ENCODE measurements at regions of chr4 and their contacts with region 1.

Region 1: DNA sequence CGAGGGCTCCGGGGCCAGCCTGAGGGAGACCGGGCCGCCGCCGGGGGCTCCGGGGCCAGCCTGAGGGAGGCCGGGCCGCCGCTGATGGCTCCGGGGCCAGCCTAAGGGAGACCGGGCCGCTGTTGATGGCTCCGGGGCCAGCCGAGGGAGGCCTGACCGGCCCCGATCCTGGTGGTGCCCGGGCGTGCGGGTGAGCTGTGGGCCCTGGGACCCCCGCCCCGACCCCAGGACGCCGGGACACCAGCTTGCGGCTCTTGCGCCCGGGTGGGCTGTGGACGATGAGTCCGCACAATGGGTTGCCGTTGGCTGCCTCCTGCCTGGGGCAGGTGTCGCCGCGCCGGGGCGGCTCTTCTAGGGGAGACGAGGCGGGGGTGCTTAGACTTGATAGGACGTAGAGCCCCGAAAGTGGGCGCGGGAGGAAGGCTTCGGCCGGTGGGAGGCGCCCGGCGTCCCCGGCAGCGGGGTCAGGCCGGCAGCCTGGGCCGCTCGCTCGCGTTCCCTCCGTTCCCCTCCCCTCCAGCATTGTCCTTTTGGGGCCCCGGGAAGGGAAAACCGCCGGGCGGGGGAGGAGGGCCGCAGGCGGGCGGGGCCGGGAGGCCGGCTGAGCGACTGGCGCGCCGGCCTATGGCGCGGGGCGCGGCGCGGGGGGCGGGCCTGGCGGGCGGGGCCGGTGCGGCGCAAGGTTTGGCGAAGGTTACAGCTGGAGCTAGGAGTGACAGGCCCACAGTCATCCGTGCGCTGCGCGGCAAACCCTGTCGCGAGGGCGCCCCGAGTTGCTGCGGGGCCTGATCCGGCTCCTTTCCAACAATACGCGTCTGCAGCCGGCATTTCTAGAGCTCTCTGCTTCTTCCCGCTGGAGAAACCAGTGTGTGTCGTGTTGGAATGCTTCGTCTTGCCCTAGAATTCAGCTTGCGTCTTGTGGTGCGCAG is 790 bp downstream of the KIAA0232 start:
- DNase-seq: peak; percentile 76
- ATAC-seq: peak; percentile 81
- H3K4me3 ChIP-seq: peak overlapping the region; percentile 71
- H3K27ac ChIP-seq: peak overlapping the region; percentile 52
- H3K4me1 ChIP-seq: no peaks in the 10 kb centered on the region; the same call in 1 of the 2 replicates
- H3K27me3 ChIP-seq: no peaks in the 10 kb centered on the region
- CTCF ChIP-seq: no peak

Region 2: GRCh38 chr4:6824071-6824470 is 40.8 kb after region 1 on chr4:
- CTCF ChIA-PET with region 1: no interaction called
- POLR2A ChIA-PET with region 1: no interaction called
- intact Hi-C with region 1: loop called (anchors 2 kb)
- DNase-seq: peak; percentile 13
- ATAC-seq: no peak
- H3K4me3 ChIP-seq: peak overlapping the region; percentile 26; the same call in 1 of the 2 replicates
- H3K27ac ChIP-seq: peak overlapping the region; percentile 94
- H3K4me1 ChIP-seq: peaks cover 23% of the 10 kb centered on the region
- H3K27me3 ChIP-seq: no peaks in the 10 kb centered on the region
- CTCF ChIP-seq: no peak

Region 3: DNA sequence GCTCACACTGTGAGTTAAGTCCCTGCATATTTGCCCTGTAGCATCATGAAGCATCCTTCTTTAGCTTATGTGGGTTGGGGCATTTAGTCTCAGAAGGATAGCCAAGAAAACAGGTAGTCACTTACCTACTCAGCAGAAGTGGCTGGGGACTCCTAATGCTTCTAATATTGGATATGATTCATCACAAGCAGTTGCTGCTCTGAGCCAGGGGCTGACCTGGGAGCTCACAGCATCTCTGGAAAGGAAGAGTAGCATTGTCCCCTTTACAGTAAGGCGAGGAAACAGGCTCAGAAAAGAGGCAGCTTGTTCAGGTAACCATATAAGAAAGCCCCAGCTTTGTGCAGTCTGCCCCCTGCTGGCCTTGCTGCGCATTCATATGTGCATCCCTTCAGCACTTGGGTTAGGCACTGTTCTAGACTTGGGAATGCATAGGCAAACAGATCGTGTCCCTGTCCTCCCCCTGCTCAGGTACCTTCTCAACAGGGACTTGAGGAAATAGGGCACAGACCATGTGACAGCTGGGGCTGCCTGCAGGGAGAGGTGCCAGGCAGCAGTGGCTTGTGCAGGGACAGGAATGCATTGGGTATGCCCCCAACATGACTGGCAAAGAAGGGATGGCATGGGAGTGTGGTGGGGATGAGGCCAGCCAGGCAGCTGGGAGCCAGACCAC is 90.6 kb after region 1 on chr4:
- CTCF ChIA-PET with region 1: no interaction called
- POLR2A ChIA-PET with region 1: no interaction called
- intact Hi-C with region 1: loop called (anchors 2 kb)
- DNase-seq: peak; percentile 64
- ATAC-seq: peak; percentile 86
- H3K4me3 ChIP-seq: no peak overlapping the region
- H3K27ac ChIP-seq: no peak overlapping the region
- H3K4me1 ChIP-seq: no peaks in the 10 kb centered on the region
- H3K27me3 ChIP-seq: no peaks in the 10 kb centered on the region
- CTCF ChIP-seq: peak; percentile 80

Region 4: DNA sequence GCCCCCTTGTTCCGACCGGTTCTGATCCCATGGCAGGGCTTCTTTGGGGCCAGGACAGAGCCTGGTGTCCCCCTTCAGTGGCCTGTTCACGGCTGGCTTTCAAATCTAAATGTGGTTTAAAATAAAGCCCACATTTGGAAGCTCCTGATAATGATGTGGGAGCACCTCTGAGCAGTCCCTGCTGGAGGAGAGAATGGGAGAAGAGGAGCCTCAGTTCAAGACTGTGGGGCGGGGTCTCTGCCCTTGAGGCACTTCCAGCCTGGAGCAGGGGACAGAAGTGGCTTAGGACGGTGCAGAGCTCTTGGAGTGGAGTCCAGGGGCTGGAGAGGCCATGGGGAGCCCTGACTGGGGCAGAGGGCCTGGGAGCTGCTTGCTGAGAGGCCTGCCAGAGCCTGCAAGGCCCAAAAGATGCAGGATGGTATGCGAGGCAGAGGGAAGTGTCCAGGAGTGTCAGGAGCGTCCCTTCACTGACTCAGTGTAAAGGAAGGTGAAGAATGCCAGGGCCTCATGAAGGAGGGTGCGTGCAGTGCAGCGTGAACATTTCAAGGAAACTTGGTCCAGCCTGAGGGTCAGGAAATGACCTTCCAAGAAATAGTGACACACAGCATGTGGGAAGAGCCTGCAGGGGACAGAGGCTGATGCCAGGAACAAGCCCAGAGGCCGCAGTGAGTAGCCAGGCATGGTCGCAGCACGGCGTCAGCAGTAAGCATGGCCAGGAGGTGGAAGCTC is 238.8 kb after region 1 on chr4:
- CTCF ChIA-PET with region 1: no interaction called
- POLR2A ChIA-PET with region 1: interaction called, 18 read pairs
- intact Hi-C with region 1: no loop called
- DNase-seq: peak; percentile 91
- ATAC-seq: peak; percentile 99
- H3K4me3 ChIP-seq: no peak overlapping the region
- H3K27ac ChIP-seq: peak overlapping the region; percentile 87
- H3K4me1 ChIP-seq: peaks cover 11% of the 10 kb centered on the region
- H3K27me3 ChIP-seq: no peaks in the 10 kb centered on the region
- CTCF ChIP-seq: no peak

Region 5: DNA sequence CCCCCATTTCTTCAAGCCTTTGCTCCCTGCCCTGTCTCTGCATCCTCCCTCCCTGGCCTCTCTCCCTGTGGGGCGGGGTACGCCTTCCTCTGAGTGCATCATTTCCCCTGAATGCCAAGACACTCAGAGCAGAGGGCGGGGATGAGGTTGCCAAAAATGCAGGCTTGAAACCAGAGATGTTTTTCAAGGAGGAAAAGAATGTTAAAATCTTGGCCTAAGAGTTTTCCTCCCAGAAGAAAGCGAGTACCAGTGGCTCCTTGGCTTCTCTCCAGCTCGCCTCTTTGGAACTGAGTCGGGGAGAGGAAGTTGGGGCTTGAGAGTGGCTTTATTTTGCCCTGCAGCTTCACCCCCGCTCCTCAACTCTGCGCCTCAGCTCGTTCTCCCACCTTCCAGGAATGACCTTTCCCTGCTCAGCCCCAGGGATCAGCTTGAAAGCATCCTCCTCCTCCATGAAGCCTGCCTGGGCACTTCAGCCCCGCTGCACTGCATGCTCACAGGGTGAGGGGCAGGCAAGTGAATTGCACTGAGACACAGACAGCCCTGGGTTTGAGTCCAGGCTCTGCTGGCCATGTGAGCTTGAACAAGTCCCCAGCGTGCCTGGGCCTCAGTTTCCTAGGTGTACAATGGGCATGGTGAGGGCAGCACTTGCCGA is 351.5 kb after region 1 on chr4:
- CTCF ChIA-PET with region 1: no interaction called
- POLR2A ChIA-PET with region 1: no interaction called
- intact Hi-C with region 1: no loop called
- DNase-seq: peak; percentile 50
- ATAC-seq: peak; percentile 49
- H3K4me3 ChIP-seq: no peak overlapping the region
- H3K27ac ChIP-seq: no peak overlapping the region
- H3K4me1 ChIP-seq: peaks cover 5% of the 10 kb centered on the region; the same call in 1 of the 2 replicates
- H3K27me3 ChIP-seq: no peaks in the 10 kb centered on the region
- CTCF ChIP-seq: no peak

Region 6: DNA sequence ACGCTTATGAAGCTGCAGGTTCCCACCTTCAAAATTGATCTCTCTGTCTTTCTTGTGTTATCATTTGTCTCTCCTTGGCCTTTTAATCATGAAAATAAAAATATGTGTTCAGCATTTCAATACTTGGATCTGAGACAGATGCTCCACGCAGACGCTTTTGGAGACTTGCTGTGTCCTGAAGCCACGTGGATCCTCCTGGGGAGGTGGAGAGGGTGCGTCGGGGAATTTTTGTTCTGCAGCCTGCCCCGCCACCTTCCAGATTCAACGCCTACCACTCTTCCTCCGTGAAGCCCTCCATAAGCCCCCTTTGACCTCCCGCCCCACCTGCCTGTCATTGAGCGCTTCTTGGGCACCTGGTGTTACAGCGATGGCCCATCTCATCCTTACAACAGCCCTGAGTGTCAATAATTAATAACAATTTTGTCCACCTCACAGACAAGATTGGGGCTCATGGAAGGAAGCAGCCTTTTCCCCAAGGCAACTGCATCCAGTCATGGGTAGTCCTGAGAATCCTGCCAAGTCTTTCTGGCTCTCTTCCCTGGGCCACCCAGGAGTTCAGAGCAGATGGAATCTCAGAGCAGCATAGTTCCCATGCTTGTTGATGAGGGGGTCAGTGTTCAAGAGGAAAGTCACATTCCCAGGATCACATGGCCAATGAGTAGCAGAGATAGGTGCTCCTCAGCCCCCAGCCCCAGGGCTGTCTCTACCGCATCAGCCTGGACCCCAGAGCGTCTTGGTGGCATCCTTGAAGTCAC is 824.0 kb after region 1 on chr4:
- CTCF ChIA-PET with region 1: no interaction called
- POLR2A ChIA-PET with region 1: no interaction called
- intact Hi-C with region 1: no loop called
- DNase-seq: no peak
- ATAC-seq: no peak
- H3K4me3 ChIP-seq: no peak overlapping the region
- H3K27ac ChIP-seq: no peak overlapping the region
- H3K4me1 ChIP-seq: no peaks in the 10 kb centered on the region
- H3K27me3 ChIP-seq: no peaks in the 10 kb centered on the region
- CTCF ChIP-seq: no peak

Measured in PC-3 (cell line).